ENCODE measurements at regions of chr6 and their contacts with region 1.

Region 1: DNA sequence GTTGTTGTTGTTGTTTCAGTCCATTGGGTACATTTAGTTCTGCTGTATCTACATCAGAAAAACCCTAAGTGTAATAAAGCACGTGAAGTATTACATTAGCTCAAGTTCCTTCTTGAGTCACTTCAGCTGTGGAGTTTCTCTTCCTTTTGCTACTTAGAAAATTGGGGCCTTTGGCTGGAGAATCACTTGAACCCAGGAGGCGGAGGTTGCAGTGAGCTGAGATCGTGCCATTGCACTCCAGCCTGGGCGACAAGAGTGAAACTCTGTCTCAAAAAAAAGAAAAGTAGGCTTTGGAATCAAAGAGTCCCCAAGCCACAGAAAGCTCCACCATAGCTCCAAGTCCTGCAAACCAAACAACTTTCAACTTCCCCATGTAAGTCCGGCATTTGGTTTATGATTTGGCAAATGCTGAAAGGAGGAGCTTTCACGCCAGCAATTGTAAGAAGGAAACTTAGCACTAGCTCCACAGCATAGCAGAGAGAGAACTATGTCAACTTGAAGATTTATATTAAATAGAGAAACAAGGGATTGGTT is 56.5 kb upstream of the RNF144B start:
- DNase-seq: no peak
- ATAC-seq: peak; percentile 61
- H3K4me3 ChIP-seq: no peak overlapping the region
- H3K27ac ChIP-seq: peak overlapping the region; percentile 61 to 92
- H3K4me1 ChIP-seq: peaks cover 5 to 40% of the 10 kb centered on the region in 2 donors
- H3K27me3 ChIP-seq: no peaks in the 10 kb centered on the region
- CTCF ChIP-seq: no peak

Region 2: GRCh38 chr6:18491308-18492045 is 160.9 kb after region 1 on chr6:
- intact Hi-C with region 1: loop called in 1 of 2 experiments (anchors 10 kb)
- DNase-seq: peak in 1 of 4 donors; percentile 44
- ATAC-seq: no peak
- H3K4me3 ChIP-seq: no peak overlapping the region
- H3K27ac ChIP-seq: no peak overlapping the region
- H3K4me1 ChIP-seq: peaks cover 0 to 5% of the 10 kb centered on the region in 2 donors
- H3K27me3 ChIP-seq: no peaks in the 10 kb centered on the region
- CTCF ChIP-seq: no peak